Colonic mucosa (tissue), 4 donors: ENCODE measurements at regions of chr9 and their contacts with region 1.

Region 1: GRCh38 chr9:21455320-21455719 is 15.1 kb downstream of the IFNA1 start:
- DNase-seq: no peak
- H3K4me3 ChIP-seq: no peak overlapping the region
- H3K27ac ChIP-seq: no peak overlapping the region
- H3K4me1 ChIP-seq: no peaks in the 10 kb centered on the region
- H3K27me3 ChIP-seq: no peaks in the 10 kb centered on the region
- CTCF ChIP-seq: peak; percentile 51

Region 2: GRCh38 chr9:21252721-21253547 is 202.4 kb before region 1 on chr9:
- intact Hi-C with region 1: loop called (anchors 10 kb)
- DNase-seq: no peak
- H3K4me3 ChIP-seq: no peak overlapping the region
- H3K27ac ChIP-seq: no peak overlapping the region
- H3K4me1 ChIP-seq: no peaks in the 10 kb centered on the region
- H3K27me3 ChIP-seq: no peaks in the 10 kb centered on the region
- CTCF ChIP-seq: no peak

Region 3: DNA sequence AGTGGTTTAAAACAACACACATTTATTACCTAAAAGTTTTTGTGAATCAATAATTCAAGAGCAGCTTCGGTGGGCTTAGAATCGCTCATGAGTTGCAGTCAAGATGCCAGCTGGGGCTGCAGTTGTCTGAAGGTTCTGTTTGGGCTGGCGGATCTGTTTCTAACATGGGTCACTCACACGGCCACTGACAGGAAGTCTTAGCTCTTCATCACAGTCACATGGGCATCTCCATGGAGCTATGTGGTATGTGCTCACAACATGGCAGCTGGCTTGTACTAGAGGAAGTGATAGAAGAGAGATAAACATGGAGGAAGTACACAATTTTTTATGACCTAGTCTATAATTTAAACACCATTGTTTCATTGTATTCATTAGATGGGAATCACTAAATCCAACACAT is 131.3 kb before region 1 on chr9:
- intact Hi-C with region 1: loop called (anchors 2 kb)
- DNase-seq: no peak
- H3K4me3 ChIP-seq: no peak overlapping the region
- H3K27ac ChIP-seq: no peak overlapping the region
- H3K4me1 ChIP-seq: no peaks in the 10 kb centered on the region
- H3K27me3 ChIP-seq: no peaks in the 10 kb centered on the region
- CTCF ChIP-seq: no peak

Region 4: GRCh38 chr9:21392270-21392669 is 63.0 kb before region 1 on chr9:
- intact Hi-C with region 1: no loop called
- DNase-seq: no peak
- H3K4me3 ChIP-seq: no peak overlapping the region
- H3K27ac ChIP-seq: no peak overlapping the region
- H3K4me1 ChIP-seq: no peaks in the 10 kb centered on the region
- H3K27me3 ChIP-seq: no peaks in the 10 kb centered on the region
- CTCF ChIP-seq: peak; percentile 11